Tibial artery (tissue), 4 donors: ENCODE measurements at regions of chr10 and their contacts with region 1.

Region 1: GRCh38 chr10:1230592-1231275 is 174.5 kb downstream of the WDR37 start:
- DNase-seq: no peak
- H3K4me3 ChIP-seq: no peak overlapping the region
- H3K27ac ChIP-seq: no peak overlapping the region
- H3K4me1 ChIP-seq: peaks cover 0 to 7% (median 1%) of the 10 kb centered on the region in 4 donors
- H3K27me3 ChIP-seq: no peaks in the 10 kb centered on the region
- CTCF ChIP-seq: no peak

Region 2: GRCh38 chr10:2119316-2119715 is 888.6 kb after region 1 on chr10:
- intact Hi-C with region 1: loop called (anchors 5 kb)
- DNase-seq: no peak
- H3K4me3 ChIP-seq: no peak overlapping the region
- H3K27ac ChIP-seq: no peak overlapping the region
- H3K4me1 ChIP-seq: no peaks in the 10 kb centered on the region
- H3K27me3 ChIP-seq: no peaks in the 10 kb centered on the region
- CTCF ChIP-seq: no peak